GM12878 (cell line): ENCODE measurements at regions of chrX and their contacts with region 1.

Region 1: DNA sequence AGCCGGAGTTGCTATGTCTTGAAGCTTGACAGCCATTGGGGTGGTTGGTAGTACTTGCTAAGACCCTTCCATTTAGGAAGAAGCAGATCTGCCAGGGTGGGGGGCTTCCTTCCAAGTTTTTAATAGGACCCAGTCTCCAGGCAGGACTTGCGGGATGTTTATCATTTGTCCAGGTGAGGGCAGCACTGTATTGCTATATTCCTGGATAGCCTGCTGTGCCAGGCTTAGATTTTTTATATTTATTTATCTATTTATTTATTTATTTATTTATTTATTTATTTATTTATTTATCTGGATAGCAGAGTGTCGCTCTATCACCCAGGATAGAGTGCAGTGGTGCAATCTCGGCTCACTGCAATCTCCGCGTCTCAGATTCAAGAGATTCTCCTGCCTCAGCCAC is 87.4 kb upstream of the CT45A1 start:
- DNase-seq: no peak
- ATAC-seq: no peak
- H3K4me3 ChIP-seq: no peak overlapping the region
- H3K27ac ChIP-seq: no peak overlapping the region
- H3K4me1 ChIP-seq: no peaks in the 10 kb centered on the region
- H3K27me3 ChIP-seq: no peaks in the 10 kb centered on the region
- CTCF ChIP-seq: peak in 1 of 3 experiments; percentile 13; a peak in 1 of 6 replicates
- EP300 ChIP-seq: no peak
- POLR2A ChIP-seq: no peak
- RAD21 ChIP-seq: no peak

Region 2: DNA sequence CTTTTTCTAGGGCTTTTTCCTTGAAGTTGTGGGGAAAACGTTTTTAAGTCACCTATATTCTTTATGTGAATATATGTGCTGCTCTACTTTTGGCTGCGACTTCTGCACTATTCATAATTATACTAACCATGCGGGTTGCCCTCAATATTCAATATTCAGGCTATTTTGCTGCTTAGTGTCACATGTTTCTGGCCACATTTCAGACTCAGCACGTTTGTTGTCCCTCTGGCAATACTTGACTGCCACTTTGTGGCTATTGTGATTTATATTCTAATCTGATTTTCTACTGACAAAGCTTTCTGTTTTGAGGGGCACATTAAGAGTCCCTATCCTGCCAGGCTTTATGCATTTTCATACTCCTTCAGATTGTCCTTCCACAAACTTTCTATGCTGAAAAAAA is 23.6 kb after region 1 on chrX:
- CTCF ChIA-PET with region 1: interaction called, 10 read pairs
- POLR2A ChIA-PET with region 1: no interaction called
- RAD21 ChIA-PET with region 1: no interaction called
- SMC1A ChIA-PET with region 1: interaction called, 3 read pairs
- in situ Hi-C with region 1: no loop called
- intact Hi-C with region 1: no loop called
- DNase-seq: no peak
- ATAC-seq: no peak
- H3K4me3 ChIP-seq: no peak overlapping the region
- H3K27ac ChIP-seq: no peak overlapping the region
- H3K4me1 ChIP-seq: peaks cover 4% of the 10 kb centered on the region
- H3K27me3 ChIP-seq: no peaks in the 10 kb centered on the region
- CTCF ChIP-seq: no peak
- EP300 ChIP-seq: no peak
- POLR2A ChIP-seq: no peak
- RAD21 ChIP-seq: no peak